CD4-positive, alpha-beta T cell (primary cell): ENCODE measurements at regions of chr1 and their contacts with region 1.

Region 1: GRCh38 chr1:156740679-156741612 is at the start of gene MRPL24:
- DNase-seq: peak; percentile 92 to 100 (median 96)
- ATAC-seq: peak; percentile 89
- H3K4me3 ChIP-seq: peak within 1 kb of the TSS; percentile 74
- H3K4me3 Mint-ChIP-seq: peak within 1 kb of the TSS; percentile 94
- H3K27ac ChIP-seq: peak within 1 kb of the TSS; percentile 82 to 86
- H3K27ac Mint-ChIP-seq: peak within 1 kb of the TSS; percentile 89
- H3K4me1 ChIP-seq: peaks cover 28% of the 10 kb centered on the region
- H3K4me1 Mint-ChIP-seq: peaks cover 40% of the 10 kb centered on the region
- H3K27me3 ChIP-seq: no peaks in the 10 kb centered on the region
- H3K27me3 Mint-ChIP-seq: no peaks in the 10 kb centered on the region
- CTCF ChIP-seq: no peak
- total RNA-seq, gene MRPL24: 11.7 to 11.9 TPM

Region 2: GRCh38 chr1:156705918-156706656 is 34.9 kb before region 1 on chr1:
- CTCF ChIA-PET with region 1: no interaction called
- POLR2A ChIA-PET with region 1: interaction called, 11 read pairs
- intact Hi-C with region 1: no loop called
- DNase-seq: peak; percentile 60 to 86 (median 68)
- ATAC-seq: peak; percentile 75
- H3K4me3 ChIP-seq: peak overlapping the region; percentile 77
- H3K4me3 Mint-ChIP-seq: peak overlapping the region; percentile 97
- H3K27ac ChIP-seq: peak overlapping the region; percentile 53 to 66
- H3K27ac Mint-ChIP-seq: peak overlapping the region; percentile 77
- H3K4me1 ChIP-seq: peaks cover 35% of the 10 kb centered on the region
- H3K4me1 Mint-ChIP-seq: peaks cover 32% of the 10 kb centered on the region
- H3K27me3 ChIP-seq: peaks cover 22 to 24% of the 10 kb centered on the region in 2 experiments
- H3K27me3 Mint-ChIP-seq: peaks cover 39% of the 10 kb centered on the region
- CTCF ChIP-seq: peak; percentile 91

Region 3: DNA sequence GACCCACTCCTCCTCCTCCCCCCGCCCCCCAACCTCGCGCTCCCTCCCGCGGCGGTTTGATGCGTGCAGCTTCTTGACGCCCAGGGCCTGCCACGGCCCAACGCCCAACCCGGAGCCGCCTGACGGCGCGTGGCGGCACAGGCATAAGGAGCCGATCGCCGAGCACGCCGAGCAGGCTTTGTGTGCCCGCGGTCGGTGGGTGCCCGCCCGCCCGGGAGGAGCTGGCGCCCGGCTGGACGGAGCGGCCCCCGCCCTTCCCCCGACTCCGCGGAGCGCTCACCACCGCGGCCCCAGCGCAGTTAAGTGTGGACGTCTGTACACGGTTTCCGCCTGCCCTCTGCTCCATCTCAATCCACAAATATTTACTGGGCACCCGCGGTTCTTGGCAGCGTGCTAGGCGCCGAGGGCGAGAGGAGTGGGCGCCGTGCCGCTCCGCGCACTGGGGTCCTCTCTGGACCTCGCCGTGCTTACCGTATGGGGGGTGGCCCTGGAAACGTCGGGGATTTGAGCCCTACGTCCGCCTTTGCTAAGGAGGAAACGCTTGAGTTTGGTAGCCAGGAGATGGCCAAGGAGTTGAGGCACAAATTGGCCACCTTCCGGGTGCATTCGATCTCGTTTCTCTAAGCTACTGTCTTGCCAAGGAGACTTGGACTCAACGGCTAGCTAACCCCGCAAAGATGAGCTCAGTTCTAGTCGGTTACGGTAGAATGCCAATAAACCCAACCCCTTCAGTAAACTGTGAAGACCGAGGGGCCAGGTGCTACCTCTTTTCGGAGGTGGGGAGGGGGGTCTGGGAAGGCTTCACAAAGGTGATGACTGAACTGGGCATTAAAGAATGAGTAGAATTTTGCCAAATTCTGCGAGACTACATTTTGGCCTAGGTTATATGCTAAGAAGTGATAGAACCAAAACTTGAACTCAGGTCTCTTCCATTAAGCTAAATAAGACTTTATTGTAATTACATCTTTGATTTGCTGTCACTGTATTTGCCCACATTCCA is 11.1 kb after region 1 on chr1:
- CTCF ChIA-PET with region 1: interaction called, 4 read pairs
- POLR2A ChIA-PET with region 1: interaction called, 74 read pairs
- intact Hi-C with region 1: loop called (anchors 1 kb)
- DNase-seq: peak; percentile 95 to 99 (median 98)
- ATAC-seq: peak; percentile 85
- H3K4me3 ChIP-seq: peak overlapping the region; percentile 97
- H3K4me3 Mint-ChIP-seq: peak overlapping the region; percentile 91
- H3K27ac ChIP-seq: peak overlapping the region; percentile 61 to 86
- H3K27ac Mint-ChIP-seq: peak overlapping the region; percentile 85
- H3K4me1 ChIP-seq: peaks cover 49% of the 10 kb centered on the region
- H3K4me1 Mint-ChIP-seq: peaks cover 60% of the 10 kb centered on the region
- H3K27me3 ChIP-seq: no peaks in the 10 kb centered on the region
- H3K27me3 Mint-ChIP-seq: no peaks in the 10 kb centered on the region
- CTCF ChIP-seq: no peak

Region 4: DNA sequence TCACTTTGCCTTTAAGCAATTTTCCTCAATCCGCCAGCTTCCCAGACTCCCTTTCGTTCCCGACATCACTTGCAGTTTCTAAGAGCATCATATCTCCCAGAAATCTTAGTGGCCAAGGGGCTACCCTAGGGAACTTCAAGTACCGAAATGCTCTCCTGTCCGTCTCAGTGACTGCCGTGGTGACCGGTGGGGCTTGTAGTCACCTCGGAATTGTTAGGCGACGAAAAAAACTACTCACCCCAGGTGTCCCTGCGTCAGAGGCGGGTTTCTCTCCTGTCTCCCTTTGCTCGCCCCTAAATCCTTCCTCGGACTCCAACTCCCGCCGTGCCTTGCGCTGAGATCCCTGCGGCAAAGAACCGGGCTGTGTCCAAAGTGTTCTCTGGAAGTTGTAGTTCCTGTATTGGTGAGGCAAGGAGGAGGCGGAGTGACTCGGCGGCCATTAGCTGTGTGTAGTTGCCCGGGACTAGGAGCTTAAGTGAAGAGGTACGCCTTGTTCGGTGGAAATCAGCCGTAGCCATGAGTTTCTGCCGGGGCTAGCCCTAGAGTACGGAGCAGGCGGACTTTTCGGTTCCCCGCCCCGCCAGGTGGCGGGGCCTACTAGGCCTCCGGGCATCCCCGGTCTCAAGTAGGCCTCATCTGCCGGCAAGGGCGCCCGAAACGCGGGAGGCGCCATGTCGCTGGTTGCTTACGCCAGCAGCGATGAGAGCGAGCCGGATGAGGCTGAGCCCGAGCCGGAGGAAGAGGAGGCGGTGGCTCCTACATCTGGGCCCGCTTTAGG is 26.3 kb after region 1 on chr1 and contains the start of gene PRCC:
- CTCF ChIA-PET with region 1: interaction called, 12 read pairs
- POLR2A ChIA-PET with region 1: interaction called, 169 read pairs
- intact Hi-C with region 1: loop called (anchors 1 to 2 kb)
- DNase-seq: peak; percentile 91 to 100 (median 96)
- ATAC-seq: peak; percentile 88
- H3K4me3 ChIP-seq: peak within 1 kb of the TSS; percentile 87
- H3K4me3 Mint-ChIP-seq: no peak within 1 kb of the TSS
- H3K27ac ChIP-seq: peak within 1 kb of the TSS; percentile 96
- H3K27ac Mint-ChIP-seq: no peak within 1 kb of the TSS
- H3K4me1 ChIP-seq: peaks cover 42% of the 10 kb centered on the region
- H3K4me1 Mint-ChIP-seq: peaks cover 37% of the 10 kb centered on the region
- H3K27me3 ChIP-seq: no peaks in the 10 kb centered on the region
- H3K27me3 Mint-ChIP-seq: no peaks in the 10 kb centered on the region
- CTCF ChIP-seq: no peak
- total RNA-seq, gene PRCC: 49.5 to 50.0 TPM

Region 5: GRCh38 chr1:157011845-157012244 is 270.9 kb after region 1 on chr1:
- CTCF ChIA-PET with region 1: no interaction called
- POLR2A ChIA-PET with region 1: no interaction called
- intact Hi-C with region 1: no loop called
- DNase-seq: no peak
- ATAC-seq: no peak
- H3K4me3 ChIP-seq: no peak overlapping the region
- H3K4me3 Mint-ChIP-seq: no peak overlapping the region
- H3K27ac ChIP-seq: no peak overlapping the region
- H3K27ac Mint-ChIP-seq: no peak overlapping the region
- H3K4me1 ChIP-seq: no peaks in the 10 kb centered on the region
- H3K4me1 Mint-ChIP-seq: no peaks in the 10 kb centered on the region
- H3K27me3 ChIP-seq: peaks cover 23 to 35% of the 10 kb centered on the region in 2 experiments
- H3K27me3 Mint-ChIP-seq: peaks cover 41% of the 10 kb centered on the region
- CTCF ChIP-seq: no peak